CD8-positive, alpha-beta T cell (primary cell): ENCODE measurements at regions of chr14 and their contacts with region 1.

Region 1: DNA sequence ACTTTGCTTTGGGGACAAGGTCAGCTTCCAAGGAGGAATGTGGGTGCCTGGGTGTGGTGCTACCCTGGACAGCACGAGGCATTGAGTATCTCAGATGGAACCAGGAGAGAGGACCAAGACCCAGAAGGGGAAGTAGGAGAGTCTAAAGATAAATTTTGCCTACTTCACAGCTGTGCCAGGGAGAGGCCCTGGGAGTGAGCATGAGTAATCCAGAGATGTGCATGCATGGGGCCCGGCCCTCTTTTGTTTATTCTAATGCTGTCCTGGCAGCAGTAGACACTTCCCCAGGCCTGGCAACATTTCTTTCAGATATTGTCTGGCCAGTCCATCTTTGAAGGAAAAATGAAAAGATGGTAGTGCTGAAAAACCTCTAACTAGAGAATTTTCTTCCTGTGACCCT is 49.5 kb upstream of the GNPNAT1 start:
- DNase-seq: no peak
- ATAC-seq: no peak
- H3K4me3 ChIP-seq: no peak overlapping the region
- H3K4me3 Mint-ChIP-seq: no peak overlapping the region
- H3K27ac ChIP-seq: no peak overlapping the region
- H3K27ac Mint-ChIP-seq: no peak overlapping the region
- H3K4me1 ChIP-seq: no peaks in the 10 kb centered on the region
- H3K4me1 Mint-ChIP-seq: no peaks in the 10 kb centered on the region
- H3K27me3 ChIP-seq: no peaks in the 10 kb centered on the region
- H3K27me3 Mint-ChIP-seq: no peaks in the 10 kb centered on the region
- CTCF ChIP-seq: no peak

Region 2: DNA sequence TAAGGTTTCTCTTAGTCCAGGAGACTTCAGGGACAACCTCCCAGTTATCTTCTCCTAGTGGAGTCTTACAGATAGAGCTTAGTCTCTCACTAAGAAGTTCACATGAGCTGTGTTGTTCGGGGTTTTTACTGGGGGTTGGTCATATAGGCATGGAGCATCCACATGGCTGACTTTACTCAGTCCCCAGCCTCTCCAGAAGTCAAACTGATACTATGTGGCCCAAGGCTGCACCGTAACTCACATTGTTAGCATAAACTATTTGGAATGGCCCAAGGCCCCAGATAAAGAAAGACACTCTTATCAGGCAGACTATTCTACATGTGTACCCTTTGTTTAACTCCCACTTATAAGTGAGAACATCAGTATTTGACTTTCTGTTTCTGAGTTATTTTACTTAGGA is 265.1 kb before region 1 on chr14:
- CTCF ChIA-PET with region 1: no interaction called
- POLR2A ChIA-PET with region 1: no interaction called
- intact Hi-C with region 1: no loop called
- DNase-seq: no peak
- ATAC-seq: no peak
- H3K4me3 ChIP-seq: no peak overlapping the region
- H3K4me3 Mint-ChIP-seq: no peak overlapping the region
- H3K27ac ChIP-seq: no peak overlapping the region
- H3K27ac Mint-ChIP-seq: no peak overlapping the region
- H3K4me1 ChIP-seq: no peaks in the 10 kb centered on the region
- H3K4me1 Mint-ChIP-seq: no peaks in the 10 kb centered on the region
- H3K27me3 ChIP-seq: no peaks in the 10 kb centered on the region
- H3K27me3 Mint-ChIP-seq: no peaks in the 10 kb centered on the region
- CTCF ChIP-seq: no peak

Region 3: DNA sequence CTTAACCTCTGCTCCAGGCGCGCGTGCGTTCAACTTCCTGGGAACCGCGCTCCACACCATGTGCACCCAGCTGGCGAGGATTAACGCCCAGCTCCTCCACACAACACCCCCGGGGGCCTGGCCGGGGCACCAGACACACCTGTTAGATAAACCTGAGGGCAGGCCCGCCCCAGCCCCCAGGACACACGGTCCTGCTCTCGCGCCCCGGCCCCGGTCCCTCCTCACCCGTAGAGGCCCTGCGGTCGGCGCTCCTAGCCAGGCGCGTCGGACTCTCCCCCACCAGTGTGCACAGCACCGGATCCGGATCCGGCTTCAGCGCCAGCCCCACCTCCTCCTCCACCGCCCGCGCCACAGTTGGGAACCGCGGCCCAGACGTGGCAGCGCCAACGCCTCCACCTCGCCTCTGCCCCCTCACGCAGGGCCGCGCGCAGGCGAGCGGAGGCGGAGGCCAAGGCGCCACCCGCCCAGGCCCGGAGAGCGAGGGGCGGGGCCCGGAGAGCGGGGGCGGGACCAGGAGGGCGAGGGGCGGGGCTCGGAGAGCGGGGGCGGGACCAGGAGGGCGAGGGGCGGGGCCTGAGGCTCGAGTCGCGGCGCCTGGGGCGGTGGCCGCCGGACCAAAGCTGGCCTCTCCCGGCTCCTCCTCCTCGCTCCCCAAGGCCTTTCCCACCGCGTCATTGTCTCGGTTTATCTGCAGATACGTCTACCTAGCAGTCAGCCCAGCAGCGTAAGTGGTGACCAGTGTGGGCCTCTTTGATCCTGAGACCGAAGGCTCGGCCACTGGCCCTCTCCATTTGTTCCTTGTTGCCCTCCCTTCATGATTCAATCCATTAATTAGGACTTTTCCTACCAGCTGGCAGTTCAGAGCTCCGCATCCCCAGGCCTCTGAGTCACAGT is 49.5 kb before region 1 on chr14 and contains the start of gene GNPNAT1:
- CTCF ChIA-PET with region 1: no interaction called
- POLR2A ChIA-PET with region 1: no interaction called
- intact Hi-C with region 1: no loop called
- DNase-seq: peak; percentile 80 to 97 (median 88)
- ATAC-seq: peak; percentile 96
- H3K4me3 ChIP-seq: peak within 1 kb of the TSS; percentile 78 to 85
- H3K4me3 Mint-ChIP-seq: peak within 1 kb of the TSS; percentile 93
- H3K27ac ChIP-seq: peak within 1 kb of the TSS; percentile 65 to 74
- H3K27ac Mint-ChIP-seq: peak within 1 kb of the TSS; percentile 89
- H3K4me1 ChIP-seq: peaks cover 20% of the 10 kb centered on the region
- H3K4me1 Mint-ChIP-seq: peaks cover 40% of the 10 kb centered on the region
- H3K27me3 ChIP-seq: no peaks in the 10 kb centered on the region
- H3K27me3 Mint-ChIP-seq: no peaks in the 10 kb centered on the region
- CTCF ChIP-seq: no peak
- total RNA-seq, gene GNPNAT1: 5.6 to 7.5 TPM

Region 4: DNA sequence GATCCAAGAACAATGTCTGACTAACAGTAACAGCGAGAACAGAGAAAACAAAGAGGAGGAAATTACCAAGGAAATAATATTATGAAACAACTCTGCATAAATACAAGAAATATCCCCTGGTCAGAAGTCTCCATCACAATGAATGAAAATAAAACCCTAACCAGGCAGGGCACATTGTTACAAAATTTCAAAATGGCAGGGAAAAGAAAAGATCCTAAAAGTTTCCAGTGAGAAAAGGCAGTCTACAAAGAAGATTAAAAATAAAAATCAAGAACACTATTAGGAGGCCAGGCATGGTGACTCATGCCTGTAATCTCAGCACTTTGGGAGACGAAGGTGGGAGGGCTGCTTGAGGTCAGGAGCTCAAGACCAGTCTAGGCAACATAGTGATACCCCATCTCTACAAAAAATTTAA is 62.1 kb after region 1 on chr14:
- CTCF ChIA-PET with region 1: no interaction called
- POLR2A ChIA-PET with region 1: no interaction called
- intact Hi-C with region 1: loop called in 1 of 2 experiments (anchors 5 kb)
- DNase-seq: no peak
- ATAC-seq: no peak
- H3K4me3 ChIP-seq: no peak overlapping the region
- H3K4me3 Mint-ChIP-seq: no peak overlapping the region
- H3K27ac ChIP-seq: no peak overlapping the region
- H3K27ac Mint-ChIP-seq: no peak overlapping the region
- H3K4me1 ChIP-seq: no peaks in the 10 kb centered on the region
- H3K4me1 Mint-ChIP-seq: no peaks in the 10 kb centered on the region
- H3K27me3 ChIP-seq: no peaks in the 10 kb centered on the region
- H3K27me3 Mint-ChIP-seq: peaks cover 3% of the 10 kb centered on the region
- CTCF ChIP-seq: no peak